ENCODE measurements at regions of chr1 and their contacts with region 1.

Region 1: GRCh38 chr1:158124999-158125398 is 55.7 kb upstream of the CD1D start:
- DNase-seq: peak; percentile 49
- ATAC-seq: peak; percentile 96
- H3K4me3 Mint-ChIP-seq: no peak overlapping the region
- H3K27ac Mint-ChIP-seq: no peak overlapping the region
- H3K4me1 Mint-ChIP-seq: peaks cover 3% of the 10 kb centered on the region
- H3K27me3 Mint-ChIP-seq: peaks cover 16% of the 10 kb centered on the region
- CTCF ChIP-seq: peak; percentile 25

Region 2: GRCh38 chr1:157193702-157194391 is 931.2 kb before region 1 on chr1:
- CTCF ChIA-PET with region 1: interaction called, 4 read pairs
- POLR2A ChIA-PET with region 1: no interaction called
- intact Hi-C with region 1: loop called (anchors 1 kb)
- DNase-seq: peak; percentile 55
- ATAC-seq: peak; percentile 25
- H3K4me3 Mint-ChIP-seq: no peak overlapping the region
- H3K27ac Mint-ChIP-seq: no peak overlapping the region
- H3K4me1 Mint-ChIP-seq: peaks cover 4% of the 10 kb centered on the region
- H3K27me3 Mint-ChIP-seq: peaks cover 30% of the 10 kb centered on the region
- CTCF ChIP-seq: no peak

Region 3: GRCh38 chr1:157956732-157957131 is 168.3 kb before region 1 on chr1:
- CTCF ChIA-PET with region 1: interaction called, 164 read pairs
- POLR2A ChIA-PET with region 1: no interaction called
- intact Hi-C with region 1: no loop called
- DNase-seq: no peak
- ATAC-seq: peak; percentile 56
- H3K4me3 Mint-ChIP-seq: no peak overlapping the region
- H3K27ac Mint-ChIP-seq: no peak overlapping the region
- H3K4me1 Mint-ChIP-seq: peaks cover 24% of the 10 kb centered on the region
- H3K27me3 Mint-ChIP-seq: peaks cover 17% of the 10 kb centered on the region
- CTCF ChIP-seq: no peak

Region 4: GRCh38 chr1:157992031-157992832 is 132.8 kb before region 1 on chr1:
- CTCF ChIA-PET with region 1: interaction called, 276 read pairs
- POLR2A ChIA-PET with region 1: interaction called, 12 read pairs
- intact Hi-C with region 1: loop called (anchors 1 kb)
- DNase-seq: peak; percentile 46
- ATAC-seq: peak; percentile 68
- H3K4me3 Mint-ChIP-seq: peak overlapping the region; percentile 79
- H3K27ac Mint-ChIP-seq: no peak overlapping the region
- H3K4me1 Mint-ChIP-seq: peaks cover 16% of the 10 kb centered on the region
- H3K27me3 Mint-ChIP-seq: peaks cover 41% of the 10 kb centered on the region
- CTCF ChIP-seq: peak; percentile 30

Region 5: DNA sequence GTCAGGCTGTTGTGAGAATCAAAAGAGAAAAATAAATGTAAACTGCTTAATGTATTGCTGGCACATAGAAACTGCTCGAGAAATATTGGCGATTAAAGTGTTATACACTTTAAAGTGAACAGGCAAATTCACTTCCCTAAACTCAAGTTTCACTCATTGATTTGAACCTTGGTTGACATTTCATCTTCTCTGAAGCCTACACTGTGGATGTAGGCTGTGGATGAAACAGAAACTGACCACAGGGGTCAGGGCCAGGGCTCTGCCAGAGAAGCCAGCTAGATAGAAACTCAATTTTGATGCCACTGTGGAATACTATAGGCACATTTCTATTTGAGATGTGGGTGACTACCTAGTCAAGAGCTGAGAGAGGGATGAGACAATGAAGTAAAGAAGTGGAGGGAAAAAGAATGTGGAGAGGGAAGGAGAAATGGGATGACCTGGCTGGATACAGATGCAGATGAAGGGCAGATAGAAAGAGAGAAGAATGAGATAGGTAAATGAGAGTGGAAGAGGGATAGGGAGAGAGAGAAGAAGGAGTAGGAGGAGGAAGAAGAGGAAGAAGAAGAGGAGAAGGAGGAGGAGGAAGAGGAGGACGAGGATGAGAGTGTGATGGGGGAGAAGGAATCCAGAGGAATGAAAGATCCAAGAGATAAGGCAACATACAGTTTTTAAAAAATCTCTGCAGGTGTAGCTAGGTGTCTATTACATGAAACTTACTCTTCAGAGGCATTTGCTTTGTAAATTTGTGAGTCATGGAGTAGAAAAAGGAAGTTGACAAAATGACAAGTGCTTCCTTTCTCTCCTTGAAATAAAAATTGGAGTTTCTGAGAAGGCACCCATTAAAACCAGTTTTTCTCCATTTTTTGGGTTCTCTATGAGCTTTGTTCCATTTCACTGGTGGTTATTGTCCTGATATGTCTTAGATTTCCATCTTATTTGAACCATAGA is 38.3 kb after region 1 on chr1:
- CTCF ChIA-PET with region 1: interaction called, 15 read pairs
- POLR2A ChIA-PET with region 1: no interaction called
- intact Hi-C with region 1: no loop called
- DNase-seq: no peak
- ATAC-seq: peak; percentile 93
- H3K4me3 Mint-ChIP-seq: peak overlapping the region; percentile 68
- H3K27ac Mint-ChIP-seq: peak overlapping the region; percentile 74
- H3K4me1 Mint-ChIP-seq: peaks cover 57% of the 10 kb centered on the region
- H3K27me3 Mint-ChIP-seq: no peaks in the 10 kb centered on the region
- CTCF ChIP-seq: no peak

Region 6: GRCh38 chr1:158527190-158527815 is 402.3 kb after region 1 on chr1:
- CTCF ChIA-PET with region 1: interaction called, 3 read pairs
- POLR2A ChIA-PET with region 1: no interaction called
- intact Hi-C with region 1: loop called (anchors 5 kb)
- DNase-seq: no peak
- ATAC-seq: peak; percentile 34
- H3K4me3 Mint-ChIP-seq: no peak overlapping the region
- H3K27ac Mint-ChIP-seq: no peak overlapping the region
- H3K4me1 Mint-ChIP-seq: no peaks in the 10 kb centered on the region
- H3K27me3 Mint-ChIP-seq: peaks cover 34% of the 10 kb centered on the region
- CTCF ChIP-seq: no peak